HepG2 (cell line): ENCODE measurements at regions of chr15 and their contacts with region 1.

Region 1: DNA sequence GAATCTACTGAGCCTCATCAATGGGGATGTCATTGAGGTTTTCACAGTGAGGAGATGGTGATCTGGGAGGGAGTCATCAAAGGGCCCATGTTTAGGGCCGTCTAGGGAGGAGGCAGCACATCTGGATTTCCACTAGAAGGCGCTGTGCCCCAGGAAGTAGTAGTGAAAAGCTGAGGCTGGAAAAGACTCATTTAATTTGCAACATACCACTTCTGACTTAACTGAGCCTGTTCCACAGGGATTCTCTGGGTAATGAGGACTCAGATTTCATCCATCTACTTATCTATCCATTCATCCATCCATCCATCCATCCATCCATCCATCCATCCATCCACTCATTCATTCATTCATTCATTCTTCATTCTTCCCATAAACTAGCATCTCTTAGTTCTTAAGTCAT is 17.4 kb upstream of the SHF start:
- DNase-seq: peak; percentile 67
- ATAC-seq: peak; percentile 46
- H3K4me3 ChIP-seq: no peak overlapping the region
- H3K27ac ChIP-seq: no peak overlapping the region
- H3K4me1 ChIP-seq: peaks cover 34% of the 10 kb centered on the region
- H3K27me3 ChIP-seq: no peaks in the 10 kb centered on the region; a peak in 2 of 5 replicates
- CTCF ChIP-seq: peak; percentile 85
- EP300 ChIP-seq: no peak
- POLR2A ChIP-seq: no peak
- RAD21 ChIP-seq: peak; percentile 77

Region 2: GRCh38 chr15:45110256-45110820 is 94.9 kb before region 1 on chr15:
- CTCF ChIA-PET with region 1: no interaction called
- POLR2A ChIA-PET with region 1: no interaction called
- in situ Hi-C with region 1: no loop called
- intact Hi-C with region 1: no loop called
- DNase-seq: no peak
- ATAC-seq: no peak
- H3K4me3 ChIP-seq: no peak overlapping the region
- H3K27ac ChIP-seq: no peak overlapping the region
- H3K4me1 ChIP-seq: peaks cover 19% of the 10 kb centered on the region
- H3K27me3 ChIP-seq: peaks cover 15 to 63% of the 10 kb centered on the region in 2 experiments
- CTCF ChIP-seq: peak; percentile 27; the same call in 1 of the 2 replicates
- EP300 ChIP-seq: no peak
- POLR2A ChIP-seq: no peak
- RAD21 ChIP-seq: no peak

Region 3: DNA sequence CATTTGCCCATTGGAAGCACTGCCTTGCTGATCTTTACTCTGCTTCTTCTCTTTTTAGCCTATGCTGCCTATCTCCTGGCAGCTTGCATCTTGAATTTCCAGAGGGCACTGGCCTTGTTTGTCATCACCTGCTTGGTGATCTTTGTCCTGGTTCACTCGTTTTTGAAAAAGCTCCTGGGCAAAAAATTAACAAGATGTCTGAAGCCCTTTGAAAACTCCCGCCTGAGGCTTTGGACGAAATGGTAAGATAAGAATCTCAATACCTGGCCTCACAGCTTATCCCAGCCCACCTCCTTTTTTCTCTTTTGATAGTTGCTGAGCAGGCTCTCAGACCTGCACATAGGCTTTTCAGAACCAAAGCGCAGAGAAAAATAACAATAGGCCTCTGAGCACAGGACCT is 57.8 kb after region 1 on chr15:
- CTCF ChIA-PET with region 1: interaction called, 10 read pairs
- POLR2A ChIA-PET with region 1: no interaction called
- in situ Hi-C with region 1: loop called (anchors 5 kb)
- intact Hi-C with region 1: loop called (anchors 1 kb)
- DNase-seq: peak; percentile 12
- ATAC-seq: peak; percentile 60
- H3K4me3 ChIP-seq: peak overlapping the region in 1 of 3 experiments; percentile 12; a peak in 1 of 6 replicates
- H3K27ac ChIP-seq: peak overlapping the region; percentile 2
- H3K4me1 ChIP-seq: peaks cover 33% of the 10 kb centered on the region
- H3K27me3 ChIP-seq: no peaks in the 10 kb centered on the region
- CTCF ChIP-seq: no peak
- EP300 ChIP-seq: no peak; a peak in 1 of 4 replicates
- POLR2A ChIP-seq: no peak
- RAD21 ChIP-seq: no peak

Region 4: GRCh38 chr15:45268135-45268534 is 62.9 kb after region 1 on chr15:
- CTCF ChIA-PET with region 1: interaction called, 10 read pairs
- POLR2A ChIA-PET with region 1: no interaction called
- in situ Hi-C with region 1: loop called (anchors 5 kb)
- intact Hi-C with region 1: loop called (anchors 1 kb)
- DNase-seq: peak; percentile 30
- ATAC-seq: peak; percentile 77
- H3K4me3 ChIP-seq: no peak overlapping the region
- H3K27ac ChIP-seq: no peak overlapping the region
- H3K4me1 ChIP-seq: peaks cover 10% of the 10 kb centered on the region
- H3K27me3 ChIP-seq: no peaks in the 10 kb centered on the region
- CTCF ChIP-seq: peak; percentile 66
- EP300 ChIP-seq: no peak
- POLR2A ChIP-seq: no peak
- RAD21 ChIP-seq: peak; percentile 29; the same call in 1 of the 2 replicates

Region 5: DNA sequence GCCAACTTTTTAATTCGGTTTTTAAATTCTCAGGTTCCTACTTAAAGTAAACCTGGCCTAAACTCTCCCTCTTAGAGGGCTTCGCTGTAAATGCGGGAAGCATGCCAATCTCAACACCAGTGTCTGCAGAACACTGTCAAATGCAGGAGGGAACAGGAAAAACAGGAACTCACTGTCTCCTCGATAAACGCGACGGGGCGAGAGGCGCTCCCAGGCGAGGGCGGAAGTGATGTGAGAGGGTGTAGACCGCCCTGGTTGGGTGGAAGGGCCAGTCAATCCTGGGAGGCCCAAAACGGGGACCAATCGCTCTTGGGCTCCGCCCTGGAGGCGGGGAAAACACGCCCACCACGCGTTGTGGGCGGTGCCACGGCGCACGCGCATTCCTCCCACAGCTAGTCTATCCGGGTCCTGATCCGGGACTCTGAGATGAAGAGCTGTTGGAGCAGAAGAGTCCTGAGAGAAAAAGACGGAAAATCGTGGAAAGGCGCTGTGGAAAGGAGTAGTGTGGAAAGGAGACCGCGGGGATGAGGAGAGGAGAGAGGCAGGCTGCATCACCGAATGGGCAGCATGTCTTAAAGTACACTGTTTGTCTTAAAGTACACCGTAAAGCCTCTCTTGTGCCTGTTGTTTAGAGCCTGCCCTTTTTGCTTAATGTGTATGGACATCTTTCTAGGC is 74.0 kb after region 1 on chr15:
- CTCF ChIA-PET with region 1: interaction called, 3 read pairs
- POLR2A ChIA-PET with region 1: interaction called, 23 read pairs
- in situ Hi-C with region 1: no loop called
- intact Hi-C with region 1: loop called (anchors 1 kb)
- DNase-seq: peak; percentile 97
- ATAC-seq: peak; percentile 100
- H3K4me3 ChIP-seq: peak overlapping the region; percentile 69 to 91 (median 85)
- H3K27ac ChIP-seq: peak overlapping the region; percentile 73
- H3K4me1 ChIP-seq: peaks cover 34% of the 10 kb centered on the region
- H3K27me3 ChIP-seq: no peaks in the 10 kb centered on the region
- CTCF ChIP-seq: 0 out of 2 replicates have a peak, but pooled peaks have one; percentile 8
- EP300 ChIP-seq: no peak
- POLR2A ChIP-seq: peak; percentile 81 to 86
- RAD21 ChIP-seq: no peak